HEK293T (cell line): ENCODE measurements at regions of chr10 and their contacts with region 1.

Region 1: DNA sequence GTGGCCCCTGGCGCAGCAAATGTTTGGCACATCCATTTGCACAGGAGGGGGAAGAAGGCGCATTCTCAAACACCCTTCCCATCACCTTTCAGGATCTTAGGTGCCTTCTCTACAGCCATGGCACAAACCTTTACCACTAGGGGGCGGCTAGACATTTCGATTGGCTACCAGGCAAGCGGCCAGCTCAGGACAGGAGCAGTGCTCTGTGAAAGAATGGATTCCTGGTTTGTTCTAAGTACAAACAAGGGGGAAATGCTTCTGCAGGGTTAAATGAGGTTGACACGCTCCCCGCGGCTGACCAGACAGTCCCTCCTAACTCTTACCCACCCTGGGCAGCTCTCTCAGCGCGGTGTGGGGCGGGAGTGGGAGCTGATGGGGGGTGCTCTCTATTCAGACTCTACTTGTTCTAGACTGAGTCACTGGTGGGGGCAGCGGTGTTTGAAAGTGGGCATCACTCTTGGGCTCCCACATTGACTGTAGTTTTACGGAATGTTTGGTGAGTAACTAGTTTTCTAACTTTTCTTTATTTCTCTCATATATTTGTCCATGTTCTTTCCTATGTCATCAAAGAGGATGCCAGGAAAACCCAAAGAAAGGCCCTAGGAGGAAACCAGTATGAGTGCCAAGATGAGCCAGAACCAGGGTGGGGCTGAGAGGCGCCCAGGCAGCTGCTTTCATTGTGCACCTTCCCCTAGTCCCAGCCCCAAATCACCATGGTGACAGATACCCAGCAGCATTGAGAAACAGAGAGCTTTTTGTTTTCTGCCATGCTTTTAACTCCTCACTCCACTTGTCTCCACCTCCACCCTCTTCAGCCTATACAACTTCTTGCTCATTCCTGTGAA is 61.4 kb upstream of the GPR158 start:
- DNase-seq: peak; percentile 73

Region 2: GRCh38 chr10:25226775-25227682 is 113.6 kb after region 1 on chr10:
- CTCF ChIA-PET with region 1: interaction called, 17 read pairs
- POLR2A ChIA-PET with region 1: no interaction called
- DNase-seq: peak; percentile 35